ENCODE measurements at regions of chr6 and their contacts with region 1.

Region 1: GRCh38 chr6:124577734-124578281 is 384.4 kb upstream of the RNF217 start:
- DNase-seq: no peak
- H3K4me3 ChIP-seq: no peak overlapping the region
- H3K27ac ChIP-seq: no peak overlapping the region
- H3K4me1 ChIP-seq: no peaks in the 10 kb centered on the region
- H3K27me3 ChIP-seq: no peaks in the 10 kb centered on the region
- CTCF ChIP-seq: no peak
- EP300 ChIP-seq: no peak
- POLR2A ChIP-seq: no peak

Region 2: DNA sequence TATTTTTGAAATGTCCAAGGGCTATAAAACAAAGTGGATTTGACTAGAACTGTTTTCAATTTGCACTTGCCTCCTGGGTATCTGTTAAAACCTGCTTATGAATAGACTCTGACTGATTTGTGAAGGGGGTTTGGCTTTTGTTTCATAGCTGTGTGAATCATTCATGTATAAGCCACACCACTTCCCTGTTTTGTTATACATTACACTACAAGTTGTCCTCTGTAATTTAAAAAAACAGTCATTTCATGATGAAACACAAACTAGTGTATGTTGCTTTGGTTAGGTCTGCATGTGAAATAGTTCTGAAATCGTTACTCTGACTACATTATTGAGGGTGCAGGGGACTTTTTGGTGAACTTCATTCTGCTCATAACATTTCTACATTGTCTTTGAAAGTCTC is 652.5 kb before region 1 on chr6:
- intact Hi-C with region 1: loop called in 1 of 4 experiments (anchors 5 kb)
- DNase-seq: no peak
- H3K4me3 ChIP-seq: no peak overlapping the region
- H3K27ac ChIP-seq: no peak overlapping the region
- H3K4me1 ChIP-seq: no peaks in the 10 kb centered on the region
- H3K27me3 ChIP-seq: no peaks in the 10 kb centered on the region
- CTCF ChIP-seq: no peak
- EP300 ChIP-seq: no peak
- POLR2A ChIP-seq: no peak